GM12878 (cell line): ENCODE measurements at regions of chr6 and their contacts with region 1.

Region 1: DNA sequence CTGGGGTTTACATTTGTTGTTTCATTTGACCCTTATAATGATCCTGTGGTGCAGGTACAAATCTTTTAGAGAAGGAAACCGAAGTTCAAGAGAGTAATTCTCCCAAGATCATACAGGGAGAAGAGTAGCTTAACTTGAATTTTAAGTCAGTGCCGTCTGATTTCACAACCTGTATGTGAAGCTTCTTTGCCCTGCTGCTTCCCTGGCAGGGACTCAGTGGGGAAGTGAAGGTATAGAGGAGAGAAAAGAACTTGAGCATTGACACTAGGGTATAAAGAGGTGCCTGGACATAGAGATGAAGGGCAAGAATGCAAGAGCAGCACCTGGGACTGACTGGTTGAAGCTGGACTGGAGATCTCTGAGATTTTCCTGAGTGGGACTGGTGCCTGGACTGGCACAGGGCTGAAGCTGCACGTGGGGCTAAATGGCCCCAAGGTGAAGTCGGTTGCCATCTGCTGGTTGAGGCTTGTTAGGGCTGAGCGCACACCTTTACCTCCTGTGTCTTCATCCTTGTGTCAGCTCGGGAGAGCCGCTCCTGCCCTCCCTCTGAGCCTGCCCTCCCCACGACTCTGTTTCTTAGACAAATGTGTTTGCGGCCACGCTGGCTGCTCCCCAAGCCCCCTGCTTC is 41.8 kb downstream of the FARS2 start:
- DNase-seq: peak; percentile 41
- ATAC-seq: peak; percentile 93
- H3K4me3 ChIP-seq: peak overlapping the region; percentile 55
- H3K27ac ChIP-seq: peak overlapping the region; percentile 68
- H3K4me1 ChIP-seq: peaks cover 18% of the 10 kb centered on the region
- H3K27me3 ChIP-seq: no peaks in the 10 kb centered on the region
- CTCF ChIP-seq: peak; percentile 87 to 93 (median 90)
- EP300 ChIP-seq: no peak
- POLR2A ChIP-seq: no peak
- RAD21 ChIP-seq: peak; percentile 78

Region 2: GRCh38 chr6:4788953-4789584 is 514.0 kb before region 1 on chr6:
- CTCF ChIA-PET with region 1: no interaction called
- POLR2A ChIA-PET with region 1: no interaction called
- RAD21 ChIA-PET with region 1: no interaction called
- SMC1A ChIA-PET with region 1: no interaction called
- in situ Hi-C with region 1: no loop called
- intact Hi-C with region 1: no loop called
- DNase-seq: no peak
- ATAC-seq: peak; percentile 97
- H3K4me3 ChIP-seq: peak overlapping the region; percentile 53; the same call in 1 of the 2 replicates
- H3K27ac ChIP-seq: peak overlapping the region; percentile 42
- H3K4me1 ChIP-seq: peaks cover 27% of the 10 kb centered on the region
- H3K27me3 ChIP-seq: no peaks in the 10 kb centered on the region
- CTCF ChIP-seq: peak; percentile 39 to 69 (median 43)
- EP300 ChIP-seq: no peak
- POLR2A ChIP-seq: no peak
- RAD21 ChIP-seq: peak; percentile 21; the same call in 1 of the 2 replicates

Region 3: DNA sequence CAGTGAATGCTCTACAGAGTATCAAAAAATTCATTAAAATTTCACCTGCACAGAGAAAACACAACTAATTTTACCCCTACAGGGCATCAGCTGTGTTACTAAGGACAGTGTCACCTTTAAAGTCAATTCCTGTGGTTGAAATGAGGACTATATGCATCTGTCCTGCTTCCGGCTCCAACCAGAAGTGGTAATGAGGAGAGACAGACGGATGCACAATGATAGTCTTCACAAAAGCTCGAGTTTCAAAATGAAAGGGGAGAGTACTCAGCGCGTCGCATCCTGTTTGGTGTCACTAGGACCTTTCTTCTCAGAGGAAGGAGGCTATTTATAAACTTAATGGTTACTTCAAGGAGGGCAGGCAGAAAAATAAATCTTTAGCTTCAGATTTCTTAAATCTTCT is 128.9 kb before region 1 on chr6:
- CTCF ChIA-PET with region 1: interaction called, 26 read pairs
- POLR2A ChIA-PET with region 1: no interaction called
- RAD21 ChIA-PET with region 1: interaction called, 13 read pairs
- SMC1A ChIA-PET with region 1: interaction called, 25 read pairs
- in situ Hi-C with region 1: no loop called
- intact Hi-C with region 1: no loop called
- DNase-seq: peak; percentile 87
- ATAC-seq: peak; percentile 99
- H3K4me3 ChIP-seq: no peak overlapping the region
- H3K27ac ChIP-seq: peak overlapping the region; percentile 93
- H3K4me1 ChIP-seq: peaks cover 29% of the 10 kb centered on the region
- H3K27me3 ChIP-seq: no peaks in the 10 kb centered on the region
- CTCF ChIP-seq: no peak
- EP300 ChIP-seq: no peak
- POLR2A ChIP-seq: peak; percentile 69
- RAD21 ChIP-seq: no peak

Region 4: GRCh38 chr6:5260661-5261544 is 42.2 kb before region 1 on chr6 and contains the starts of genes FARS2 and LYRM4:
- CTCF ChIA-PET with region 1: interaction called, 32 read pairs
- POLR2A ChIA-PET with region 1: interaction called, 3 read pairs
- RAD21 ChIA-PET with region 1: interaction called, 19 read pairs
- SMC1A ChIA-PET with region 1: interaction called, 18 read pairs
- in situ Hi-C with region 1: no loop called
- intact Hi-C with region 1: loop called (anchors 1 kb)
- DNase-seq: no peak
- ATAC-seq: peak; percentile 87
- H3K4me3 ChIP-seq: peak within 1 kb of the TSS; percentile 90
- H3K27ac ChIP-seq: peak within 1 kb of the TSS; percentile 98
- H3K4me1 ChIP-seq: peaks cover 8% of the 10 kb centered on the region; the same call in 1 of the 2 replicates
- H3K27me3 ChIP-seq: no peaks in the 10 kb centered on the region
- CTCF ChIP-seq: peak in 2 of 3 experiments; percentile 11 to 18; a peak in 2 of 6 replicates
- EP300 ChIP-seq: no peak
- POLR2A ChIP-seq: peak; percentile 64
- RAD21 ChIP-seq: no peak
- polyA plus RNA-seq, gene FARS2: 35.1 to 46.7 TPM
- polyA plus RNA-seq, gene LYRM4: 65.6 to 66.8 TPM

Region 5: DNA sequence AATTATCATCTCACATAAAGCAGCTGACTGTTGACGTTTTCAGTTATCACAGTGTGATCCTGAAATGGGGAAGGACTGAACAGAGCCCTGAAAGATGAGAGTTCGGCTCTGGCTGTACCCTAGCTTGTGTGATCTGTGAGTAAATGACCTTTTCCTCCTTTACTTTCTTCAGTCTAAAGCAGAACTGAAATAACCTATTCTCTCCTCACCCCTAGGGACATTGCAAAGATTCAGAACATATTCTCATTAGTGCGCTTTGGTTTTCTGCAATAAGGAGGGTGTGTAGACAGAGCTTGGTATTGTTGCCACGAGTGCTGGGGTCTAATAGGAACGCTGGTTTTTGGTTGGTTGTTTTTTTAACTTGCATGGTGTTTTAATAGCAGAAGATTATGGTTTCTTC is 25.1 kb before region 1 on chr6:
- CTCF ChIA-PET with region 1: interaction called, 19 read pairs
- POLR2A ChIA-PET with region 1: interaction called, 4 read pairs
- RAD21 ChIA-PET with region 1: interaction called, 13 read pairs
- SMC1A ChIA-PET with region 1: interaction called, 22 read pairs
- in situ Hi-C with region 1: no loop called
- intact Hi-C with region 1: loop called (anchors 1 kb)
- DNase-seq: peak; percentile 60
- ATAC-seq: peak; percentile 90
- H3K4me3 ChIP-seq: no peak overlapping the region
- H3K27ac ChIP-seq: peak overlapping the region; percentile 28; the same call in 1 of the 2 replicates
- H3K4me1 ChIP-seq: peaks cover 21% of the 10 kb centered on the region
- H3K27me3 ChIP-seq: no peaks in the 10 kb centered on the region
- CTCF ChIP-seq: no peak
- EP300 ChIP-seq: peak in 1 of 2 experiments; percentile 38; a peak in 1 of 4 replicates
- POLR2A ChIP-seq: no peak
- RAD21 ChIP-seq: no peak

Region 6: DNA sequence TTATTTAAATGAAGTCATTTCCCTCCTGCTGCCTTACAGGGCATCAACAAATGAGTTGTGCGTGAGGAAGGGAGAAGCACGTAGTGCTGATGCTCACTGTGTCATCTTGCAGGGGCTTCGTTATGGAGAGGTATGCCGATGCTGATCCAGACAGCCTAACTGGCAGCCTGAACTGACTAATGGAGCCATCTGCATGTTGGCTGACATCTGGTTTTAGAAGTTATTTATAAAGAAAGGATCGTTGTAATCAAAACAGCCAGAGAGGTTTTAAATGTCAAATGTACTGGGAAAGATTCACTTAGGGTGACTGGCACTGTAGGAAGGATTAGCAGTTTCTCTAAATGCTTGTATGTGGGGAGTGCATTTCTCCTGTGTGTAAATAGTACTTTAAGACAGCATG is 12.8 kb after region 1 on chr6:
- CTCF ChIA-PET with region 1: interaction called, 23 read pairs
- POLR2A ChIA-PET with region 1: no interaction called
- RAD21 ChIA-PET with region 1: no interaction called
- SMC1A ChIA-PET with region 1: interaction called, 5 read pairs
- in situ Hi-C with region 1: no loop called
- intact Hi-C with region 1: no loop called
- DNase-seq: no peak
- ATAC-seq: no peak
- H3K4me3 ChIP-seq: no peak overlapping the region
- H3K27ac ChIP-seq: no peak overlapping the region
- H3K4me1 ChIP-seq: peaks cover 6% of the 10 kb centered on the region; the same call in 1 of the 2 replicates
- H3K27me3 ChIP-seq: no peaks in the 10 kb centered on the region
- CTCF ChIP-seq: no peak
- EP300 ChIP-seq: no peak
- POLR2A ChIP-seq: no peak
- RAD21 ChIP-seq: no peak

Region 7: DNA sequence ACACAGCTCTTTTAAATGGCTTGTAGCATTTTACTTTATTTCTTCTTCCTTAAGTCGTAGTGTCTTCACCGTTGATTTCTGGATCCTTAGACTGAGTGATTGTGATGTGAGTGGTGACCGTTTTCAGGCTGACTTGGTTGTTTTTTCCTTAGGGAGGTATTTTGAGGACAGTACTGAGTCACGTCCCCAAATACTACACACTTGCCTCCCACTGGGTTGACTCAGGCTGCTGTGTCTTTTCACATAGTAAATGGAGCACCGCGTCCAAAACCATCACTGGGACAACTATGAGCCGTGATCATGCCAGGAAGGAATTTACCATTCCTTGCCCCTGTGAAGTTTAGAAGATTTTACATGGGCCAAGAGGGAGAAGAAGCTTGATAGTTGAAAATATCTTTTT is 132.3 kb after region 1 on chr6:
- CTCF ChIA-PET with region 1: no interaction called
- POLR2A ChIA-PET with region 1: no interaction called
- RAD21 ChIA-PET with region 1: no interaction called
- SMC1A ChIA-PET with region 1: no interaction called
- in situ Hi-C with region 1: no loop called
- intact Hi-C with region 1: no loop called
- DNase-seq: no peak
- ATAC-seq: no peak
- H3K4me3 ChIP-seq: no peak overlapping the region
- H3K27ac ChIP-seq: no peak overlapping the region
- H3K4me1 ChIP-seq: no peaks in the 10 kb centered on the region
- H3K27me3 ChIP-seq: no peaks in the 10 kb centered on the region
- CTCF ChIP-seq: no peak
- EP300 ChIP-seq: no peak
- POLR2A ChIP-seq: no peak
- RAD21 ChIP-seq: no peak